ENCODE measurements at regions of chr2 and their contacts with region 1.

Region 1: DNA sequence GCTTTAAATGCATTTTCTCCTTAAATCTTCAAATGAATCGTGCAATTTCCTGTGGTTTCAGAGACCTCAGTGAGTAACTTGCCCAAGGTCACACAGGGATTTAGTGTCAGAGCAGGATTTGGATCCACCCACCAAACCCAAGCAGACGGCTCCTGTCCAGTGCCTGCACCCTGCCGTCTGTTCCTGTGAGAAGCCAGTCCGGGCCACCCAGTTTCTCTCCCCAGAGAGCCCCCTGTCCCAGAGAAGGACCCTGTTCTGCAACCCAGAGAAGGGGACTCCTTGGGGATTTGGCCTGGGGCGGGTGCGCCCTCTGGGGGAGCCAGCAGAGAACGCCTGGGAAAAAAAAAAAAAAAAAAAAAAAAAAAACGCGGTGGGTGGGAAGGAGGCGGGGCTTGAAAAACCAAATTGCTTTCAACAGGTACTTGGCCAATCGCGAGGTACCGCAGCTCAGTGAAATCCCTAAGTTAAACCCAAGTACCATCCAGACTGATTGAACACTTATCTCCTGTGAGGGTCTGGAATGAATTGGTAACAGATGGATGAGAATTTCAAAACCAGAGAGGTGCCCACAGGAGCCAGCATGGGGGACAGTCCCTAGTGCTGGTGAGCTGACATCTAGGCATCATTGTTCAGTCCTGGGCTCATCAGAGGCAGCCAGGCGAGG is 30.9 kb upstream of the REEP1 start:
- DNase-seq: peak; percentile 60 to 74
- H3K4me3 ChIP-seq: no peak overlapping the region
- H3K4me3 Mint-ChIP-seq: no peak overlapping the region
- H3K27ac Mint-ChIP-seq: no peak overlapping the region
- H3K4me1 ChIP-seq: no peaks in the 10 kb centered on the region
- H3K4me1 Mint-ChIP-seq: peaks cover 13% of the 10 kb centered on the region
- H3K27me3 ChIP-seq: no peaks in the 10 kb centered on the region
- H3K27me3 Mint-ChIP-seq: no peaks in the 10 kb centered on the region
- CTCF ChIP-seq: peak; percentile 80 to 90

Region 2: DNA sequence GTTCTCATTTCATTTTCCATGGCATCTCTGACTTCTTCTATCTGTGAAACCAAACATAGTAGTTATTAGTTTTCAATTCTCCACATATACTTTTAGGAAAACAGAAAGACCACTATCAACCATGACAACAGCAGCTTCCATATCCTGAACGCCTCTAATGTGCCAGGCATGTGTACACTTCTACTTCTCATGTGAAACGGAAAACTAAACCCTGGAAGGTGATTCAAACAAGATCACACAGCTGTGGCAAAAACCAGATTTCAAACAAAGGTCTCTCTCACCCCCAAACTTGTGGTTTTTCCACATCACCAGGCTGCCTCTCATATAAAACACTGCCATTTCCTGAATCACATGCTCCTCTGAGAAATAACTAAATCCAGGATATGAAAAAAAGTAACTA is 220.5 kb before region 1 on chr2:
- CTCF ChIA-PET with region 1: no interaction called
- POLR2A ChIA-PET with region 1: no interaction called
- intact Hi-C with region 1: loop called (anchors 5 kb)
- DNase-seq: no peak
- H3K4me3 ChIP-seq: no peak overlapping the region
- H3K4me3 Mint-ChIP-seq: no peak overlapping the region
- H3K27ac Mint-ChIP-seq: no peak overlapping the region
- H3K4me1 ChIP-seq: no peaks in the 10 kb centered on the region
- H3K4me1 Mint-ChIP-seq: no peaks in the 10 kb centered on the region
- H3K27me3 ChIP-seq: no peaks in the 10 kb centered on the region
- H3K27me3 Mint-ChIP-seq: no peaks in the 10 kb centered on the region
- CTCF ChIP-seq: no peak

Region 3: GRCh38 chr2:86195055-86195807 is 173.1 kb before region 1 on chr2 and contains the start of gene IMMT:
- CTCF ChIA-PET with region 1: interaction called, 5 read pairs
- POLR2A ChIA-PET with region 1: interaction called, 3 read pairs
- intact Hi-C with region 1: loop called (anchors 2 kb)
- DNase-seq: peak; percentile 98
- H3K4me3 ChIP-seq: peak within 1 kb of the TSS; percentile 68
- H3K4me3 Mint-ChIP-seq: peak within 1 kb of the TSS; percentile 84
- H3K27ac Mint-ChIP-seq: peak within 1 kb of the TSS; percentile 81
- H3K4me1 ChIP-seq: peaks cover 9% of the 10 kb centered on the region; the same call in 1 of the 2 replicates
- H3K4me1 Mint-ChIP-seq: peaks cover 27% of the 10 kb centered on the region
- H3K27me3 ChIP-seq: no peaks in the 10 kb centered on the region
- H3K27me3 Mint-ChIP-seq: no peaks in the 10 kb centered on the region
- CTCF ChIP-seq: no peak
- total RNA-seq, gene IMMT: 125 and 129 TPM in 2 replicates

Region 4: DNA sequence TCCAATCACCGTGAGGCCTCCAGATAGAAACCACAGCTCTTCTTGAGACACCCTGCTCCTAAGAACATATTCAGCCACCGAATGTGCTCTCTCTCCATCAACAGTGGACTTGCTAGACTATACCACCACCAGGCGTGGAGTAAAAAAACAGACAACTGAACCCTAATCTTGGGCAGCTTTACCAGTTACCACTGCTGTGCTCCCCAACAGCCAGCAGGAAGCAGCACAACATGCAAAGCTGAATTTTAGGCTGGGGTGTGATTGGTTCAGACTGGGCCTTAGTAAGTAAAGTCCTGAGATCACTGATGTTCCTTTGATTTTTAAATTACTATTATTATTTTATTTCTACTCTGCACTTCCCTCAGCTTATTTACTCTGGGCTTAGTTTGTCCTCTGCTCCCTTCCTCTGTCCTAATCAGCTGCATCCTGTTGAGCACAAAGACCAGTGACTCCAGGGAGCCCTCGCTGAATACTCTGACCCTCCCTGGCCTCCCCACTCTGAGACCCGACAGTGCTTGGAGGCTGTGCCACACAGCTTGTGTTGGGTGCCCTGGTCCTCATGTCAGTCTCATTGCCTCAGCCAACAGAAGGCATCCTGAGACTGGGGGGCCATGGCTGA is 147.1 kb before region 1 on chr2:
- CTCF ChIA-PET with region 1: interaction called, 5 read pairs
- POLR2A ChIA-PET with region 1: no interaction called
- intact Hi-C with region 1: loop called (anchors 1 kb)
- DNase-seq: peak in 1 of 2 experiments; percentile 43
- H3K4me3 ChIP-seq: no peak overlapping the region
- H3K4me3 Mint-ChIP-seq: no peak overlapping the region
- H3K27ac Mint-ChIP-seq: no peak overlapping the region
- H3K4me1 ChIP-seq: peaks cover 9% of the 10 kb centered on the region
- H3K4me1 Mint-ChIP-seq: peaks cover 30% of the 10 kb centered on the region
- H3K27me3 ChIP-seq: no peaks in the 10 kb centered on the region
- H3K27me3 Mint-ChIP-seq: no peaks in the 10 kb centered on the region
- CTCF ChIP-seq: peak; percentile 69 to 71

Region 5: GRCh38 chr2:86298411-86299379 is 69.6 kb before region 1 on chr2:
- CTCF ChIA-PET with region 1: interaction called, 50 read pairs
- POLR2A ChIA-PET with region 1: no interaction called
- intact Hi-C with region 1: loop called (anchors 1 kb)
- DNase-seq: peak; percentile 49 to 62
- H3K4me3 ChIP-seq: no peak overlapping the region
- H3K4me3 Mint-ChIP-seq: no peak overlapping the region
- H3K27ac Mint-ChIP-seq: no peak overlapping the region
- H3K4me1 ChIP-seq: no peaks in the 10 kb centered on the region
- H3K4me1 Mint-ChIP-seq: peaks cover 8% of the 10 kb centered on the region
- H3K27me3 ChIP-seq: no peaks in the 10 kb centered on the region
- H3K27me3 Mint-ChIP-seq: no peaks in the 10 kb centered on the region
- CTCF ChIP-seq: peak; percentile 52 to 76

Region 6: DNA sequence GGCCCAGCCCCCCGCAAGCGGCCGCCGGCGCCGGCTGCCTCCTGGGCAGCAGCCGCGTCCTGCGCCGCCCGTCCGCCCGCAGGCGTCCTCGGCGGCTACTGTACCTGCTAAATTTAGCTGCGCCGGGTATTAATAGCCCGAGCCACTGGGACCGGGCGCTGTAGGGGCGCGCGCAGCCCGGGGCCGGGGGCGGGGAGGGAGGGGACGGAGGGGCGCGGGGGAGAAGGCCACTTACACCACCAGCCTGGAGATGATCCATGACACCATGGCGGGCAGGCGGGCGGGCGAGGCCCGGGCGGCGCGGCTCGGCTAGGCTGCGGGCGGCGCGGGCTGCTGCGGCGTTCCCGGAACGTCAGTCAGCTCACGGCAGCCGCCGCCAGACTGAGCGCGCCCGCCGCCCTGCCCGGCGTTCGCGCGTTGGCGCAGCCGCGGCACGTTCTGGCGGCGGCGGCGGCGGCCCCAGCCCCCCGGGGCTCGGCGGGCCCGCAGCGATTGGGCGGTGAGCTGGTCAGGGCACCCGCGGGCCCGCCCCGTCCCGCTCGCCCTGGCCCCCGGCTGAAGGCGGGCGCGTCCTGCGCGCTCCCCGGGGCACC is 31.0 kb before region 1 on chr2 and contains the start of gene REEP1:
- CTCF ChIA-PET with region 1: interaction called, 10 read pairs
- POLR2A ChIA-PET with region 1: no interaction called
- intact Hi-C with region 1: no loop called
- DNase-seq: peak in 1 of 2 experiments; percentile 70
- H3K4me3 ChIP-seq: peak within 1 kb of the TSS; percentile 40
- H3K4me3 Mint-ChIP-seq: peak within 1 kb of the TSS; percentile 87
- H3K27ac Mint-ChIP-seq: no peak within 1 kb of the TSS
- H3K4me1 ChIP-seq: peaks cover 9% of the 10 kb centered on the region
- H3K4me1 Mint-ChIP-seq: peaks cover 19% of the 10 kb centered on the region
- H3K27me3 ChIP-seq: no peaks in the 10 kb centered on the region
- H3K27me3 Mint-ChIP-seq: peaks cover 3% of the 10 kb centered on the region
- CTCF ChIP-seq: no peak
- total RNA-seq, gene REEP1: 14.9 and 16.6 TPM in 2 replicates

Measured in Caco-2 (cell line).